ENCODE measurements at regions of chr2 and their contacts with region 1.

Region 1: DNA sequence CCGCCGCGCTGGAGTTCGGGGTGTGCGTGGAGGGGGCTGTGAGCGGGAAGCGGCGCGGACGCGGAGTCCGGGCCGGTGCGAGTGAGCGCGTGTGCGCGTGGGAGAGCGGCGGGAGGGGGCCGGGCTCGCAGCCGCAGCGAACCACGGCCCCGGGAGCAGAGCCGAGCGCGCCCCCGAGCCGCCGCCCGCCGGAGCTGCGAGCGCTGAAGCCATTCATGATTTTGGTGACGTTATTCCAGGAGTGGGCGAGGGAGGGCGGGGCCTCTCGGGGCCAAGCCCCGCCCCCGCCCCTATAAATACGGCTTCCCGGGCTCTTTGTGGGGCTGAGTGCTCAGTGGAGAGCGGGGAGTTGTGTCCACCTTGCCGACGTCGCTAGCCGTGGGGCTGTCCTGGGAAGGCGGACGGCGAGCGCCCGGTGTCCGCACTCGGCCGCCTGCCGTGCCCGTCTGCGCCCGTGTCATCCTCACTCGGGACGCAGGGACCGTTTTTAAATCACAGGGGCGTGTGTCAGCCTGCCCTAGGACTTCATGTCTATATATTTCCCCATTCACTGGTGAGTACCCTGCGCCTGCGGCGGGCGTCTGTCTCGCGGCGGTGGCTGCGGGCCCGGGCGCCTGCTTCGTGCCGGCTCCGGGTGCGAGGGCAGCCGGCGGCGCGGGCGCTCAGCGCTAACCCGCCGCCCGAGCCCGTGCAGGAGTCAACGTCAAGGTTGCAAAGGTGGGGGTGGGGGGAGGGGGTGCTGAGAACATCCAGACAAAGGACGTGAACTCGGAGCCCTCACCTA is at the start of gene LBH:
- DNase-seq: peak; percentile 90
- H3K4me3 Mint-ChIP-seq: peak within 1 kb of the TSS; percentile 83
- H3K27ac Mint-ChIP-seq: peak within 1 kb of the TSS; percentile 74
- H3K4me1 Mint-ChIP-seq: peaks cover 56% of the 10 kb centered on the region
- H3K27me3 Mint-ChIP-seq: peaks cover 3% of the 10 kb centered on the region
- total RNA-seq, gene LBH: 71.4 to 75.3 TPM

Region 2: DNA sequence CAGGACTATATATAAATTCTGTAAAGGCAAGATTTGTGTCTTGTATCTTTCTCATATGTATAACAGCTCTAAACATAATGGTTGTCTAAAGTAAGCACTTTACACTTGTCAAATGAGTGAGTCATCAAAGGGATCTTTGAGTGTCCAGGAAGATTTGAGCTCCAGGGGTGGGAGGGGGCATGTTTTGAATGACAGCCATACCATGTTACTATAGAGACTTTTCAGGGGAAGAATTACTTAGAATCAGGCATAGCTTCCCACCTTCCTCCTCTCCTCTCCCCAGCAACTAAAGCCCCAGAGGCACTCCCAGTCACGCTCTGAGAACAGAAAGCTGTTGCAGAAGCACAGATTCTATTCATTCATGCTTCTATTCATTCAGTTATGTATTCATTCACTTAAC is 244.3 kb before region 1 on chr2:
- CTCF ChIA-PET with region 1: no interaction called
- intact Hi-C with region 1: no loop called
- DNase-seq: no peak
- H3K4me3 Mint-ChIP-seq: no peak overlapping the region
- H3K27ac Mint-ChIP-seq: no peak overlapping the region
- H3K4me1 Mint-ChIP-seq: no peaks in the 10 kb centered on the region
- H3K27me3 Mint-ChIP-seq: peaks cover under 1% of the 10 kb centered on the region

Region 3: GRCh38 chr2:30266051-30266621 is 34.7 kb after region 1 on chr2:
- CTCF ChIA-PET with region 1: interaction called, 3 read pairs
- intact Hi-C with region 1: loop called (anchors 1 kb)
- DNase-seq: peak; percentile 73
- H3K4me3 Mint-ChIP-seq: peak overlapping the region; percentile 79
- H3K27ac Mint-ChIP-seq: peak overlapping the region; percentile 89
- H3K4me1 Mint-ChIP-seq: peaks cover 81% of the 10 kb centered on the region
- H3K27me3 Mint-ChIP-seq: no peaks in the 10 kb centered on the region

Measured in activated naive CD4-positive, alpha-beta T cell treated with anti-CD3 and anti-CD28 coated beads for 36 hours (primary cell).